ENCODE measurements at regions of chr16 and their contacts with region 1.

Region 1: GRCh38 chr16:67521095-67521804 is 7.4 kb upstream of the RIPOR1 start:
- DNase-seq: peak; percentile 82 to 96
- H3K4me3 ChIP-seq: peak overlapping the region; percentile 54; the same call in 1 of the 2 replicates
- H3K27ac ChIP-seq: peak overlapping the region; percentile 70
- H3K4me1 ChIP-seq: peaks cover 22% of the 10 kb centered on the region
- H3K27me3 ChIP-seq: no peaks in the 10 kb centered on the region
- CTCF ChIP-seq: peak; percentile 88

Region 2: GRCh38 chr16:67339453-67339852 is 181.8 kb before region 1 on chr16:
- CTCF ChIA-PET with region 1: interaction called, 10 read pairs
- POLR2A ChIA-PET with region 1: no interaction called
- intact Hi-C with region 1: no loop called
- DNase-seq: no peak
- H3K4me3 ChIP-seq: no peak overlapping the region
- H3K27ac ChIP-seq: no peak overlapping the region
- H3K4me1 ChIP-seq: no peaks in the 10 kb centered on the region
- H3K27me3 ChIP-seq: no peaks in the 10 kb centered on the region
- CTCF ChIP-seq: no peak

Region 3: GRCh38 chr16:67561824-67562525 is 40.7 kb after region 1 on chr16:
- CTCF ChIA-PET with region 1: interaction called, 17 read pairs
- POLR2A ChIA-PET with region 1: no interaction called
- intact Hi-C with region 1: loop called (anchors 1 kb)
- DNase-seq: peak; percentile 87 to 97
- H3K4me3 ChIP-seq: peak overlapping the region; percentile 61
- H3K27ac ChIP-seq: peak overlapping the region; percentile 89
- H3K4me1 ChIP-seq: peaks cover 24% of the 10 kb centered on the region
- H3K27me3 ChIP-seq: no peaks in the 10 kb centered on the region
- CTCF ChIP-seq: no peak

Region 4: GRCh38 chr16:67667817-67668494 is 146.7 kb after region 1 on chr16:
- CTCF ChIA-PET with region 1: interaction called, 6 read pairs
- POLR2A ChIA-PET with region 1: no interaction called
- intact Hi-C with region 1: loop called (anchors 1 kb)
- DNase-seq: peak; percentile 68 to 77
- H3K4me3 ChIP-seq: no peak overlapping the region
- H3K27ac ChIP-seq: no peak overlapping the region
- H3K4me1 ChIP-seq: no peaks in the 10 kb centered on the region
- H3K27me3 ChIP-seq: no peaks in the 10 kb centered on the region
- CTCF ChIP-seq: peak; percentile 52

Region 5: DNA sequence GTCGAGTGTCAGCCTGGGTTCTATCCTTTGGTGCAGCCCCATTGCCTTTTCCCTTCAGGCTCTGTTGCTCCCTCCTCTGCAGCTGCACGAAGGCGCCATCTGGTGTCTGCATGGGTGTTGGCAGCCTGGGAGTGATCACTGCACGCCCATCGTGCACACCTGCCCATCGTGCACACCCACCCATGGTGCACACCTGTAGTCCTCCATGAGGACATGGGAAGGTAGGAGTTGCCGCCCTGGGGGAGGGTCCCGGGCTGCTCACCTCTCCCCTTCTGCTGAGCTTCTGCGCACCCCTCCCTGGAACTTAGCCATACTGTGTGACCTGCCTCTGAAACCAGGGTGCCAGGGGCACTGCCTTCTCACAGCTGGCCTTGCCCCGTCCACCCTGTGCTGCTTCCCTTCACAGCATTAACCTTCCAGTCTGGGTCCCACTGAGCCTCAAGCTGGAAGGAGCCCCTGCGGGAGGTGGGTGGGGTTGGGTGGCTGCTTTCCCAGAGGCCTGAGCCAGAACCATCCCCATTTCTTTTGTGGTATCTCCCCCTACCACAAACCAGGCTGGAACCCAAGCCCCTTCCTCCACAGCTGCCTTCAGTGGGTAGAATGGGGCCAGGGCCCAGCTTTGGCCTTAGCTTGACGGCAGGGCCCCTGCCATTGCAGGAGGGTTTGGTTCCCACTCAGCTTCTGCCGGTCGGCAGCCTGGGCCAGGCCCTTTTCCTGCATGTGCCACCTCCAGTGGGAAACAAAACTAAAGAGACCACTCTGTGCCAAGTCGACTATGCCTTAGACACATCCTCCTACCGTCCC is 407.5 kb after region 1 on chr16:
- CTCF ChIA-PET with region 1: no interaction called
- POLR2A ChIA-PET with region 1: no interaction called
- intact Hi-C with region 1: loop called (anchors 1 kb)
- DNase-seq: peak in 1 of 2 experiments; percentile 64
- H3K4me3 ChIP-seq: no peak overlapping the region
- H3K27ac ChIP-seq: no peak overlapping the region
- H3K4me1 ChIP-seq: no peaks in the 10 kb centered on the region
- H3K27me3 ChIP-seq: no peaks in the 10 kb centered on the region
- CTCF ChIP-seq: peak; percentile 90

Region 6: GRCh38 chr16:68270353-68270752 is 749.1 kb after region 1 on chr16:
- CTCF ChIA-PET with region 1: no interaction called
- POLR2A ChIA-PET with region 1: interaction called, 15 read pairs
- intact Hi-C with region 1: no loop called
- DNase-seq: no peak
- H3K4me3 ChIP-seq: no peak overlapping the region
- H3K27ac ChIP-seq: no peak overlapping the region
- H3K4me1 ChIP-seq: peaks cover 37% of the 10 kb centered on the region
- H3K27me3 ChIP-seq: no peaks in the 10 kb centered on the region
- CTCF ChIP-seq: no peak

Measured in PC-9 (cell line).